Cardiac septum (tissue), 1 donor: ENCODE measurements at regions of chr16 and their contacts with region 1.

Region 1: GRCh38 chr16:82626791-82627261 is at the start of gene CDH13:
- DNase-seq: no peak
- total RNA-seq, gene CDH13: 108 TPM

Region 2: GRCh38 chr16:82699711-82700495 is 73.1 kb after region 1 on chr16:
- intact Hi-C with region 1: loop called (anchors 2 kb)
- DNase-seq: no peak

Region 3: DNA sequence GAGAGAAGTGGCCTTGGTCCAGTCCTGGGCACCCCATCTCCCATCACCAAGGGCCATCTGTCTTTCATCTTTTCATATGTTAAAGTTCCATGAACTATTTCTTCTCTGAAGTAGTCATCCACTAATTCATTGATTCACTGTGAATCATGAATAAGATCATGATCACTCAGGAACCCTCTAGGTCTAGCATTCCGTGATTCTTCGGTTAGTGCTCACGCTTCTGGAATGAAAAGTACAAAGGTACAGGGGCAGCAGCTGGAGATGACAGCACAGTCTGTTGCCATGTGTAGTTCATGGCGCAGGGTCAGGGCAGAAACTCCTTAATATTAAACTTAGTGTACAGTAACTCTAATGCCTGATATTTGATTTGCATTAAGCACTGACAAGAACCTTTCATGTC is 127.0 kb after region 1 on chr16:
- intact Hi-C with region 1: loop called (anchors 5 kb)
- DNase-seq: no peak

Region 4: DNA sequence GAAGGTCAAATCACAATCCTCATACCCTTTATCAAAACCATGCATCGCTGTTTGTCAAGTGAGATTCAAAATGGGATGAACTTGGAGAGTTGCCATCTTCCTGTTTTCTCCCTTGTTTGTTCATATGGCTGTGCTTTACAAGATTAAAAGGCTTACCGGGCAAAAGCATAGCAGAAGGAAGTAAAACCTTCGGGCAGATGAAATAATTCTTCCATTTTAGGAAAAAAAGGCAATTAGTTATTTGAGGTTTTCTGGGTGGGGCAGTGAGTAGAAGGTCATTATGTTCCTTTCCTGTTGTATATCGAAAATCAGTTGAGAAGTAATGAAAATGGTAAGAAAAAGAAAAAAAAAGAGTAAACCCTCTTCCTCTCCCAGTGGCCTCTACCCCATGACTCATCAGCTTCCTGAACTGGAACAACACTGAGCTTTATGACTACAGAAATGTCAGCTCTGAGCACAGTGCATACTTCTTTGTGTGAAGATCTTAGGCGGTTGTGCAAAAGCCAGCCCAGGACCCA is 369.2 kb after region 1 on chr16:
- intact Hi-C with region 1: loop called (anchors 5 kb)
- DNase-seq: no peak

Region 5: DNA sequence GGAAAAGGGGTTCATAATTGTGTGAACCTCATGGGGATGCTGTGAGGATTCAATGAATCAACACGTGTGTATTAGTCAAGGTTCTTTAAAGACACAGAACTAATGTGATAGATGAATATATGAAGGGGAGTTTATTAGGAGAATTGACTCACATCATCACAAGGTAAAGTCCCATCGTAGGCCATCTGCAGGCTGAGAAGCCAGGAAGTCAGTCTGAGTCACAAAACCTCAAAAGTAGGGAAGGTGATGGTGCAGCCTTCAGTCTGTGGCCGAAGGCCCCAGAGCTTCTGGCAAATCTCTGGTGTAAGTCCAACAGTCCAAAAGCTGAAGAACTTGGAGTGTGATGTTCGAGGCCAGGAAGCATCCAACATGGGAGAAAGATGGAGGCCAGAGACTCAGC is 413.3 kb after region 1 on chr16:
- intact Hi-C with region 1: no loop called
- DNase-seq: no peak